PC-9 (cell line): ENCODE measurements at regions of chr3 and their contacts with region 1.

Region 1: DNA sequence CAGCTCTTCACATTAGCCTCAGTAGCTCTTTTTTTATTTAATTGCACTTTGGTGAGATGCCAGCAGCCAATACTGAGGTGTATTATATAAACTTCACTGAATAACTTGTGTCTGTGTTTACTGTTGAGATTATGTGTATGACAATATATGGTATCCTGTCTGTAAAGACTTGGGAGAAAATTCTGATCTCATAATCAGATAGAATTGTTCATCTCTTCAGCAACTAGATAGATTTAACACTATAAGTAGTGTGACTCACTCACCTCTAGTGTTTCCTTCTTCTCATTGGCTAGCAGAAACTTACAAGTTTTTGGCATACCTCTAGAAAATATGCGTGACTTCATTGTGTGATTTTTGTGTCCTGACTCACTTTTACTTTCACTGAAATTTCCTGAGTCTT is 67.6 kb upstream of the TGFBR2 start:
- DNase-seq: peak; percentile 20 to 93
- H3K4me3 ChIP-seq: peak overlapping the region; percentile 46; the same call in 1 of the 2 replicates
- H3K27ac ChIP-seq: peak overlapping the region; percentile 97
- H3K4me1 ChIP-seq: peaks cover 22% of the 10 kb centered on the region
- H3K27me3 ChIP-seq: no peaks in the 10 kb centered on the region
- CTCF ChIP-seq: no peak

Region 2: DNA sequence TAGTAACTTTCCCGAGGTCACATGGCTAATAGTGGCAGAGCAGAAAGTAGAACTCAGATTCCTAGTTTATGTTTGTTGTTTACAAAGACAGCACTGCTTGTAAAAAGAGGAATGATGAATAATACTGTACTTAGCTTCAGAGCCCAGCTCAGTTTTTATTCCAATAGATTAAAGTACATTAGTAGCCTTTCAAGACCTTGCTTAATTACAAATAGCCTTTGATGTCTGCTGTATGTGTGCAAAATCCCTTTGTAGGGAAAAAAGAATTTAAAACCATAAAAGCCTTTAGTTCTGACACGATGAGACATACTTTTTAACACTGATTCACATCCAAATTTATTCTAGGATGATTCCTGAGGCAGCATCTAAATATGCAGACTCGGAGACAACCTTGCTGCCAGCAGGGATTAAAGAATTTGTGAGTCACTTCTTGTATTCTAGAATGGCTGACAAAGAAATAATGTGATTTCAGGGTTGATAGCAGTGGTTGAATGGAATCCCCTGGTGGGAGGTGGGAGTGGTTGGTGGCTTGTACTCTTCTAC is 256.6 kb before region 1 on chr3:
- CTCF ChIA-PET with region 1: no interaction called
- POLR2A ChIA-PET with region 1: no interaction called
- intact Hi-C with region 1: loop called (anchors 2 kb)
- DNase-seq: peak in 1 of 2 experiments; percentile 12
- H3K4me3 ChIP-seq: no peak overlapping the region
- H3K27ac ChIP-seq: no peak overlapping the region
- H3K4me1 ChIP-seq: no peaks in the 10 kb centered on the region
- H3K27me3 ChIP-seq: no peaks in the 10 kb centered on the region
- CTCF ChIP-seq: no peak

Region 3: GRCh38 chr3:30440147-30440604 is 98.6 kb before region 1 on chr3:
- CTCF ChIA-PET with region 1: no interaction called
- POLR2A ChIA-PET with region 1: no interaction called
- intact Hi-C with region 1: loop called (anchors 1 kb)
- DNase-seq: peak in 1 of 2 experiments; percentile 54
- H3K4me3 ChIP-seq: no peak overlapping the region
- H3K27ac ChIP-seq: no peak overlapping the region
- H3K4me1 ChIP-seq: no peaks in the 10 kb centered on the region
- H3K27me3 ChIP-seq: no peaks in the 10 kb centered on the region
- CTCF ChIP-seq: no peak

Region 4: GRCh38 chr3:30597131-30597768 is 58.5 kb after region 1 on chr3:
- CTCF ChIA-PET with region 1: interaction called, 3 read pairs
- POLR2A ChIA-PET with region 1: interaction called, 5 read pairs
- intact Hi-C with region 1: loop called (anchors 1 kb)
- DNase-seq: peak; percentile 47 to 94
- H3K4me3 ChIP-seq: no peak overlapping the region
- H3K27ac ChIP-seq: peak overlapping the region; percentile 80
- H3K4me1 ChIP-seq: peaks cover 23% of the 10 kb centered on the region
- H3K27me3 ChIP-seq: no peaks in the 10 kb centered on the region
- CTCF ChIP-seq: no peak

Region 5: DNA sequence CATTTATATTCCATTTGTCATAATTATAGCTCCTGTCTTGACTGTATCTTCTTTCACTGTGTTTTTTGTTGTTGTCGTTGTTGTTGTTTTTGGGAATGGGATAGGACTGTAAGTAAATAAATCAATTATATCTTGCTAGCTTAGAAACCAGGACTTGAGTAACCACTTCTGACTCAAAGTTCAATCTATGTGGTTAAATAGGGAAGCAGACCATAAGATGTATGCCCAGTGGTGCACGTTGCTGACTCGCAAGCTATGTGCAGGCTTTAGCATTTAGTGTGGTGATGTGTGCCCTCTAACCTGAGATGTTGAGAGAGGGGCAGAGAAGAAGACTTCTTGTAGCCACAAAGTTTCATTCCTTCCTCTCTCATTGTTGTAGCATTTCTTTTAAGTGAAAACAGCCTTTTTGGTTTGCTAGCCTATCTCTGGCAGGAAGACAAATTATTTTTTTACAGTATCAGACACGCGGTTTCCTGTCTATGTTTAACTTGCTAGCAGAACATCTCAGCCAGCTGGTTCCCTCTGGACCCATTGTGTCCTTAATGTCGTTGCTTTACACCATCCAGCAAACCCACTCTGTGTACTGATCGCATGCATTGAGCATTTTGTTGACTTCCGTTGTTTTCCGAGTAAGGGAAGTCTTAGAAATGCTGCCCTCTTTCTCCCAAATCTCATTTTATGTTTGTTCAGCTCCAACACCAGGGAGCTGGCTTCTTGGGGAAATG is 119.7 kb after region 1 on chr3:
- CTCF ChIA-PET with region 1: no interaction called
- POLR2A ChIA-PET with region 1: no interaction called
- intact Hi-C with region 1: loop called (anchors 1 kb)
- DNase-seq: peak; percentile 9 to 69
- H3K4me3 ChIP-seq: no peak overlapping the region
- H3K27ac ChIP-seq: peak overlapping the region; percentile 49
- H3K4me1 ChIP-seq: peaks cover 26% of the 10 kb centered on the region
- H3K27me3 ChIP-seq: no peaks in the 10 kb centered on the region
- CTCF ChIP-seq: no peak

Region 6: GRCh38 chr3:31185062-31185357 is 646.2 kb after region 1 on chr3:
- CTCF ChIA-PET with region 1: no interaction called
- POLR2A ChIA-PET with region 1: no interaction called
- intact Hi-C with region 1: no loop called
- DNase-seq: no peak
- H3K4me3 ChIP-seq: no peak overlapping the region
- H3K27ac ChIP-seq: no peak overlapping the region
- H3K4me1 ChIP-seq: no peaks in the 10 kb centered on the region
- H3K27me3 ChIP-seq: no peaks in the 10 kb centered on the region
- CTCF ChIP-seq: no peak

Region 7: GRCh38 chr3:31361371-31362273 is 822.8 kb after region 1 on chr3:
- CTCF ChIA-PET with region 1: no interaction called
- POLR2A ChIA-PET with region 1: no interaction called
- intact Hi-C with region 1: no loop called
- DNase-seq: no peak
- H3K4me3 ChIP-seq: no peak overlapping the region
- H3K27ac ChIP-seq: no peak overlapping the region
- H3K4me1 ChIP-seq: no peaks in the 10 kb centered on the region
- H3K27me3 ChIP-seq: no peaks in the 10 kb centered on the region
- CTCF ChIP-seq: no peak